Breast epithelium (tissue), 4 donors: ENCODE measurements at regions of chr1 and their contacts with region 1.

Region 1: GRCh38 chr1:158819461-158820443 is 11.4 kb upstream of the MNDA start:
- DNase-seq: no peak
- H3K4me3 ChIP-seq: no peak overlapping the region
- H3K27ac ChIP-seq: no peak overlapping the region
- H3K4me1 ChIP-seq: no peaks in the 10 kb centered on the region
- H3K27me3 ChIP-seq: no peaks in the 10 kb centered on the region
- CTCF ChIP-seq: no peak
- POLR2A ChIP-seq: no peak

Region 2: GRCh38 chr1:158131217-158131616 is 688.5 kb before region 1 on chr1:
- intact Hi-C with region 1: loop called (anchors 5 kb)
- DNase-seq: no peak
- H3K4me3 ChIP-seq: no peak overlapping the region
- H3K27ac ChIP-seq: no peak overlapping the region
- H3K4me1 ChIP-seq: no peaks in the 10 kb centered on the region
- H3K27me3 ChIP-seq: no peaks in the 10 kb centered on the region
- CTCF ChIP-seq: no peak
- POLR2A ChIP-seq: no peak

Region 3: DNA sequence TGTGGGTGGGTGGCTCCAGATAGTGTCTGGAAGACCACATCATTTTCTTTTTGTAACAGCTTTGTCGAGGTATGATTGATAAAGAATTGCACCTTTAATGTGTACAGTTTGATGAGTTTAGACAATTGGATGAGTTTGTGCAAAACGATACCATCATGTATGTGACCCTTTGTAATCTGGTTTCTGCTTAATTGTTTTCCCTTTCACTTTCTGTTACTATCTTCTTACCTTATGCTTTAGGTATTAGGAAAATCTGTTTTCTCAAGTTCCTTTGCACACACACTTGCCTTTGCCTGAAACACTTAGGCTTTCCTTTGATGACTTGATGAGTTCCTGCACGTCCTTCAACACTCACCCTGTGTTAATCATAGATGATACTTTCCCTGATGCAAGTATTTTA is 207.8 kb before region 1 on chr1:
- intact Hi-C with region 1: no loop called
- DNase-seq: no peak
- H3K4me3 ChIP-seq: no peak overlapping the region
- H3K27ac ChIP-seq: no peak overlapping the region
- H3K4me1 ChIP-seq: no peaks in the 10 kb centered on the region
- H3K27me3 ChIP-seq: no peaks in the 10 kb centered on the region
- CTCF ChIP-seq: no peak
- POLR2A ChIP-seq: no peak

Region 4: DNA sequence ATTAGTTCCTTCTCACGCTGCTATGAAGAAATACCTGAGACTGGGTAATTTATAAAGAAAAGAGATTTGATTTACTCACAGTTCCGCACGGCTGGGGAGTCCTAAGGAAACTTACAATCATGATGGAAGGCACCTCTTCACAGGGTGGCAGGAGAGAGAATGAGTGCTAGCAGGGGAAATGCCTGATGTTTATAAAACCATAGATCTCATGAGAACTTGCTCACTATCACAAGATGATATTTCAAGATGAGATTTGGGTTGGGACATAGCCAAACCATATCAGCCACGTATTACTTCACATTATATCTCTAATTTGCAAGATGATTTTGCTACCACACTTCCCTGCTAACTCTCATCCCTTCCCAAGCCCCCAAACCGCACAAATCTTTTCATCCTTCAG is 20.5 kb after region 1 on chr1:
- intact Hi-C with region 1: no loop called
- DNase-seq: no peak
- H3K4me3 ChIP-seq: no peak overlapping the region
- H3K27ac ChIP-seq: no peak overlapping the region
- H3K4me1 ChIP-seq: no peaks in the 10 kb centered on the region
- H3K27me3 ChIP-seq: no peaks in the 10 kb centered on the region
- CTCF ChIP-seq: no peak
- POLR2A ChIP-seq: no peak